ENCODE measurements at regions of chr2 and their contacts with region 1.

Region 1: GRCh38 chr2:162123806-162124758 is 28.0 kb downstream of the GCG start:
- DNase-seq: peak in 4 of 5 donors; percentile 58 to 64 (median 60)
- H3K4me3 ChIP-seq: no peak overlapping the region
- H3K4me3 Mint-ChIP-seq: no peak overlapping the region
- H3K27ac ChIP-seq: no peak overlapping the region
- H3K27ac Mint-ChIP-seq: peak overlapping the region in 2 of 7 donors; percentile 18 to 64
- H3K4me1 ChIP-seq: peaks cover 6% of the 10 kb centered on the region
- H3K4me1 Mint-ChIP-seq: peaks cover 11 to 16% (median 12%) of the 10 kb centered on the region in 4 donors
- H3K27me3 ChIP-seq: no peaks in the 10 kb centered on the region
- H3K27me3 Mint-ChIP-seq: no peaks in the 10 kb centered on the region

Region 2: GRCh38 chr2:161586517-161587167 is 537.4 kb before region 1 on chr2:
- CTCF ChIA-PET with region 1: interaction called, 60 read pairs
- POLR2A ChIA-PET with region 1: no interaction called
- intact Hi-C with region 1: loop called (anchors 1 kb)
- DNase-seq: peak in 4 of 5 donors; percentile 23 to 33 (median 28)
- H3K4me3 ChIP-seq: no peak overlapping the region
- H3K4me3 Mint-ChIP-seq: no peak overlapping the region
- H3K27ac ChIP-seq: no peak overlapping the region
- H3K27ac Mint-ChIP-seq: no peak overlapping the region
- H3K4me1 ChIP-seq: no peaks in the 10 kb centered on the region
- H3K4me1 Mint-ChIP-seq: no peaks in the 10 kb centered on the region
- H3K27me3 ChIP-seq: no peaks in the 10 kb centered on the region
- H3K27me3 Mint-ChIP-seq: peaks cover 0 to 4% of the 10 kb centered on the region in 2 donors

Region 3: GRCh38 chr2:161954103-161954502 is 170.0 kb before region 1 on chr2:
- CTCF ChIA-PET with region 1: interaction called, 7 read pairs
- POLR2A ChIA-PET with region 1: no interaction called
- intact Hi-C with region 1: loop called (anchors 2 kb)
- DNase-seq: peak; percentile 56 to 72 (median 65)
- H3K4me3 ChIP-seq: no peak overlapping the region
- H3K4me3 Mint-ChIP-seq: peak overlapping the region in 7 of 8 donors; percentile 23 to 78 (median 60)
- H3K27ac ChIP-seq: no peak overlapping the region
- H3K27ac Mint-ChIP-seq: peak overlapping the region; percentile 14 to 90 (median 59)
- H3K4me1 ChIP-seq: peaks cover 69% of the 10 kb centered on the region
- H3K4me1 Mint-ChIP-seq: peaks cover 48 to 61% (median 54%) of the 10 kb centered on the region in 4 donors
- H3K27me3 ChIP-seq: no peaks in the 10 kb centered on the region
- H3K27me3 Mint-ChIP-seq: no peaks in the 10 kb centered on the region

Region 4: DNA sequence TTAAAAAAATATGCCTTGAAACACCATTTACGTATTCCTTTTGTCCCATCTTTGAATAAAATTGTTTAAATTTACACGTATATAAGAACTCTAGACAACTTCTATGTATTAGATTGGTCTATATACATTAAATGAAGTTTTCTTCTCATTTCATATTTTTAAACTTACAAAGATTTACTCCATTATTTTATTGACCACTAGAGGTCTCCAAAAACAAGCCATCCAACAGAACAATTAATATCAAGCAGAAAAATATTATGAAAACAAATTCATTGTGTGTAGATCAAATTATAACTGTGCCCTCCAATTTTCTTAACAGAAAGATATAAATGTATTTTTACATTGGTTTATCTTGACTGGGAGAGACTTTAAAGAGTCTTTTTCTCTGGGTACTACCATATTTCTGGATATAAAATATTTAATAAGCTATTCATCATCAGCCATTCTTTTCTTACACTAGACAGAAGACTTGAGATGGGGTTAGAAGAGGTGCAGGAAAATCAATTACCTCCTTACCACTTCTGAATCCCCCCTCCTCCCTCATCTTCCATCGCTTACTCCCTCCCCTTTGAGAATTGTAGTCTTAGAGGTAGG is 116.5 kb before region 1 on chr2:
- CTCF ChIA-PET with region 1: interaction called, 54 read pairs
- POLR2A ChIA-PET with region 1: interaction called, 3 read pairs
- intact Hi-C with region 1: loop called (anchors 1 kb)
- DNase-seq: peak in 4 of 5 donors; percentile 36 to 46 (median 40)
- H3K4me3 ChIP-seq: no peak overlapping the region
- H3K4me3 Mint-ChIP-seq: no peak overlapping the region
- H3K27ac ChIP-seq: no peak overlapping the region
- H3K27ac Mint-ChIP-seq: peak overlapping the region in 6 of 7 donors; percentile 4 to 33 (median 21)
- H3K4me1 ChIP-seq: peaks cover 40% of the 10 kb centered on the region
- H3K4me1 Mint-ChIP-seq: peaks cover 36 to 55% (median 44%) of the 10 kb centered on the region in 4 donors
- H3K27me3 ChIP-seq: no peaks in the 10 kb centered on the region
- H3K27me3 Mint-ChIP-seq: no peaks in the 10 kb centered on the region

Region 5: DNA sequence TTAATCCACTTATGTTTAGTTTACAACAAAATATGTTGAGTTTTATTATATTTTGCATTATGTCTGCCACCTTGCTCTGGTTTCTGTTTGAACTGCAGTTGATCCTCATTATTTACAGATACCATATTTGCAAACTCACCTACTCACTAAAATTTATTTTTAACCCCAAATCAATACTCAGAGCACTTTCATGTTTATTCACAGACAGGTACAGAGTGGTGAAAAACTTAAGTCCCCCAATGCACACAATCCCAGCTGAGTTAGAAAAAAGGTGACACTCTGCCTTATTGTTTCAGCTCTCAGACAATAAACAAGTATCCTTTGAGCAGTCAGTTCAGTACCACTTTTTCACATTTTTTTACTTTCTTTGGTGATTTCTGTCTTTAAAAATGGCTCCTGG is 14.2 kb after region 1 on chr2:
- CTCF ChIA-PET with region 1: interaction called, 14 read pairs
- POLR2A ChIA-PET with region 1: no interaction called
- intact Hi-C with region 1: no loop called
- DNase-seq: no peak
- H3K4me3 ChIP-seq: no peak overlapping the region
- H3K4me3 Mint-ChIP-seq: no peak overlapping the region
- H3K27ac ChIP-seq: no peak overlapping the region
- H3K27ac Mint-ChIP-seq: no peak overlapping the region
- H3K4me1 ChIP-seq: no peaks in the 10 kb centered on the region
- H3K4me1 Mint-ChIP-seq: no peaks in the 10 kb centered on the region
- H3K27me3 ChIP-seq: peaks cover 4% of the 10 kb centered on the region
- H3K27me3 Mint-ChIP-seq: peaks cover 11 to 22% of the 10 kb centered on the region in 2 donors

Measured in CD4-positive, alpha-beta memory T cell (primary cell).